Activated CD4-positive, alpha-beta T cell treated with anti-CD3 and anti-CD28 coated beads, Interleukin-2, amount 10 ng/mL, durations not matched to agents 24 days and 14 days (primary cell): ENCODE measurements at regions of chr4 and their contacts with region 1.

Region 1: GRCh38 chr4:145808021-145808650 is 128.2 kb downstream of the C4orf51 start:
- DNase-seq: peak; percentile 83
- H3K4me3 Mint-ChIP-seq: peak overlapping the region; percentile 60
- H3K27ac Mint-ChIP-seq: peak overlapping the region; percentile 95
- H3K4me1 Mint-ChIP-seq: peaks cover 44% of the 10 kb centered on the region
- H3K27me3 Mint-ChIP-seq: no peaks in the 10 kb centered on the region

Region 2: GRCh38 chr4:145732895-145733880 is 74.9 kb before region 1 on chr4:
- intact Hi-C with region 1: loop called (anchors 1 kb)
- DNase-seq: peak; percentile 96
- H3K4me3 Mint-ChIP-seq: peak overlapping the region; percentile 77
- H3K27ac Mint-ChIP-seq: peak overlapping the region; percentile 76
- H3K4me1 Mint-ChIP-seq: peaks cover 18% of the 10 kb centered on the region
- H3K27me3 Mint-ChIP-seq: peaks cover 2% of the 10 kb centered on the region

Region 3: DNA sequence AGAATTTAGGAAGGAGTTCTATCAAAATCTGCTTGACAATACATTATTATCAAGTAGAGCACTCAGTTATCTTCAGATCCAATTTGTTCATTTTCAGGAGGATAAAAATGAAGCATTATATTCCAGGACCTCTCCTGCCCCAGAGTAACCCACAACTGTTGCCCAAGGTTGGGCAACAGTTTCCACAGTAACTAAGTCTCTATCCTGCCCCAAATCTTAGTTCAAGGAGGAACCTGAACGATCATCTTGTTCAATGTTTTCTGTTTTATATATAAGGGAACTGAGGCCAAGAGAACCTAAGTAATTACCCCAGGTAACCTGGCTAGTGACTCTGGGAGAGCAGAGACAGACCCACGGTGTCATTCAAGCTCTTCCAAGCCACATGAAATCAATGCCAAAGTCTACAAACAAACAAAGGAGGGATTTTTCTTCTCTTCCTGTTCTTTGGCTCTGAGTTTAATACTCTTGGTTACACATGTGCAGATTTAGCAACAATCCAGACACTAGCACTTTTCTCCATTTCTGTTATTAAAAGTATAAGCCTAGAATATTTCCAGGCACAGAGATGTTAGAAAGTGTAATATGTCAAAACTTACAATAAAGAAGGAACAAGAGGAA is 22.6 kb before region 1 on chr4:
- intact Hi-C with region 1: loop called (anchors 1 kb)
- DNase-seq: no peak
- H3K4me3 Mint-ChIP-seq: no peak overlapping the region
- H3K27ac Mint-ChIP-seq: peak overlapping the region; percentile 98
- H3K4me1 Mint-ChIP-seq: peaks cover 39% of the 10 kb centered on the region
- H3K27me3 Mint-ChIP-seq: no peaks in the 10 kb centered on the region

Region 4: DNA sequence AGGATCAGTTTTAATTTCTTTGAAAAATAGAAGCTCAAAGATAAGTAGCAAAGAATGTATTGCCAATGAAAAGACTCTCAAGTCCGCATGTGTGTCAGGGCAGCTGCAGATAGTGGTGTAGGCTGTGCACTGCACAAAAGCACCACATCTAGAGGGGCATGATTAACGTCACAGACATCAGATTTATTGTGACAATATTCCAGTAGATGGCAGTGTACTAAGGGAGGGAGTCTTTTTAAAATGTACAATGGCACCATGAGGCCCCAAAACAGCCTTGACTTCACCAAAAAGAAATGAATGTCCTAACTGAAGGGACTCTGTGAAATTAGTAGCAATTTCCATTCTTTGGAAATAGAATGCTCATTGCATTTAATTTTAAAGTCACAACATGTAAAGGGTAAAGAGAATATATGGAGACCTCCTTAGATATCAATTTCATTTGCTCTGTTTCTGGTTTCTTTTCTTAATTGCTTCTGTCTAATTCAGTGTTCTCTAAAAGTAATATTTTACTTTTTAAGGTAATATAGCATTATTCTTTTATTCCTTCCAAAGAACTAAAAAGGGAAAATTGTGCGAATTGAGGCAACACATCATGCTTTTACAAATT is 32.1 kb after region 1 on chr4:
- intact Hi-C with region 1: loop called (anchors 5 kb)
- DNase-seq: peak; percentile 67
- H3K4me3 Mint-ChIP-seq: no peak overlapping the region
- H3K27ac Mint-ChIP-seq: no peak overlapping the region
- H3K4me1 Mint-ChIP-seq: peaks cover 20% of the 10 kb centered on the region
- H3K27me3 Mint-ChIP-seq: no peaks in the 10 kb centered on the region

Region 5: GRCh38 chr4:146132445-146132844 is 324.3 kb after region 1 on chr4:
- intact Hi-C with region 1: loop called (anchors 1 kb)
- DNase-seq: peak; percentile 73
- H3K4me3 Mint-ChIP-seq: peak overlapping the region; percentile 7
- H3K27ac Mint-ChIP-seq: peak overlapping the region; percentile 55
- H3K4me1 Mint-ChIP-seq: peaks cover 11% of the 10 kb centered on the region
- H3K27me3 Mint-ChIP-seq: peaks cover 6% of the 10 kb centered on the region

Region 6: DNA sequence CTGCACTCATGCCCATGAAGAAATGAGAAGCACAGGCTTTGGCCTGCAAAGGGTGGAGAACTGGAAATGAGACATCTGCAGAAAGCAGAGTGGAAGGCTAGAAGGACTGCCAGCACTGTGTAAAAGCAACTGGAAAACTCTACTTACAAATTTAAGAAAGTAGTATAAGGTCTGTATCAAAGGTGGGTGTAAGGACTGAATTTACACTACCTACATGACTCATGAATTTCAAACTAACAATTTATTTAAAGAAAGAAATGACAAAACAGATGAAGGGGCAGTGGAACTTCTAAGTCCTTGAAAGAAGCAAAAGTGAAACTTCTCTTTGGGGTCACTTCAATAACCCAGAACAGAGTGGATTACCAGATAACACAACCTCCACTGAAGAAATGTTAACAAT is 642.4 kb after region 1 on chr4:
- intact Hi-C with region 1: loop called (anchors 10 kb)
- DNase-seq: no peak
- H3K4me3 Mint-ChIP-seq: peak overlapping the region; percentile 56
- H3K27ac Mint-ChIP-seq: peak overlapping the region; percentile 84
- H3K4me1 Mint-ChIP-seq: peaks cover 23% of the 10 kb centered on the region
- H3K27me3 Mint-ChIP-seq: no peaks in the 10 kb centered on the region